ENCODE measurements at regions of chr2 and their contacts with region 1.

Region 1: GRCh38 chr2:12716282-12717190 is at the start of gene TRIB2:
- DNase-seq: peak; percentile 80 to 95
- ATAC-seq: peak; percentile 77 to 91 (median 84)
- H3K4me3 ChIP-seq: peak within 1 kb of the TSS; percentile 89
- H3K4me3 Mint-ChIP-seq: peak within 1 kb of the TSS; percentile 99
- H3K27ac ChIP-seq: peak within 1 kb of the TSS; percentile 88
- H3K27ac Mint-ChIP-seq: peak within 1 kb of the TSS; percentile 96 to 98
- H3K4me1 ChIP-seq: peaks cover 17% of the 10 kb centered on the region
- H3K4me1 Mint-ChIP-seq: peaks cover 61 to 72% of the 10 kb centered on the region in 2 donors
- H3K27me3 ChIP-seq: no peaks in the 10 kb centered on the region
- H3K27me3 Mint-ChIP-seq: no peaks in the 10 kb centered on the region
- CTCF ChIP-seq: peak; percentile 42
- total RNA-seq, gene TRIB2: 68.1 to 87.4 (median 84.5) TPM

Region 2: GRCh38 chr2:11829947-11830707 is 886.4 kb before region 1 on chr2:
- intact Hi-C with region 1: loop called (anchors 5 kb)
- DNase-seq: peak; percentile 26 to 74
- ATAC-seq: peak; percentile 75 to 81 (median 77)
- H3K4me3 ChIP-seq: peak overlapping the region; percentile 1
- H3K4me3 Mint-ChIP-seq: peak overlapping the region; percentile 88
- H3K27ac ChIP-seq: no peak overlapping the region
- H3K27ac Mint-ChIP-seq: peak overlapping the region; percentile 57 to 84
- H3K4me1 ChIP-seq: peaks cover 39% of the 10 kb centered on the region
- H3K4me1 Mint-ChIP-seq: peaks cover 48 to 49% of the 10 kb centered on the region in 2 donors
- H3K27me3 ChIP-seq: no peaks in the 10 kb centered on the region
- H3K27me3 Mint-ChIP-seq: no peaks in the 10 kb centered on the region
- CTCF ChIP-seq: no peak

Region 3: GRCh38 chr2:12005886-12006681 is 710.5 kb before region 1 on chr2:
- intact Hi-C with region 1: loop called (anchors 5 kb)
- DNase-seq: peak; percentile 81 to 91
- ATAC-seq: peak; percentile 86 to 98 (median 87)
- H3K4me3 ChIP-seq: no peak overlapping the region
- H3K4me3 Mint-ChIP-seq: peak overlapping the region; percentile 55
- H3K27ac ChIP-seq: no peak overlapping the region
- H3K27ac Mint-ChIP-seq: peak overlapping the region; percentile 50 to 81
- H3K4me1 ChIP-seq: peaks cover 19% of the 10 kb centered on the region
- H3K4me1 Mint-ChIP-seq: peaks cover 50 to 59% of the 10 kb centered on the region in 2 donors
- H3K27me3 ChIP-seq: peaks cover 67% of the 10 kb centered on the region
- H3K27me3 Mint-ChIP-seq: peaks cover 74 to 94% of the 10 kb centered on the region in 2 donors
- CTCF ChIP-seq: no peak

Region 4: DNA sequence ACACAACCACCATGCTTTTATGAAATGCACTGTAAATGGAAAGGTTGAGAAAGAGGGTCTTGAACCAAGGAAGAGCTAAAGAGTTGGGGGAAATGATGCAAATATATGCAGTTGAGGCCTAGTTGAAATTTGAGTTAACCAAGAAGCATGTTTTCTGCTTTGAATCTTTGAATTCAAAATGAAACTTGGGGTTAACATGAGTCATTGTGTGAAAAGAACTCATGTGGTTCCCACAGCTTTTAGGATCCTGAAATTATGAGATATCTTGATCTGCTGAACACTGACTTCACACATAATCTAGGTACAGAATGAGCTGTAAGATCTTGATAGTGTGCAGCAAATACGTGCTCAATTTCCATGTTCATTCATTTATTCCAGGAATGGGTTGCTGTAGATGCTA is 422.7 kb before region 1 on chr2:
- intact Hi-C with region 1: loop called (anchors 10 kb)
- DNase-seq: no peak
- ATAC-seq: peak; percentile 73 to 81 (median 75)
- H3K4me3 ChIP-seq: no peak overlapping the region
- H3K4me3 Mint-ChIP-seq: peak overlapping the region; percentile 26
- H3K27ac ChIP-seq: no peak overlapping the region
- H3K27ac Mint-ChIP-seq: peak overlapping the region in 1 of 2 donors; percentile 14
- H3K4me1 ChIP-seq: peaks cover 2% of the 10 kb centered on the region
- H3K4me1 Mint-ChIP-seq: peaks cover 22 to 27% of the 10 kb centered on the region in 2 donors
- H3K27me3 ChIP-seq: peaks cover 3% of the 10 kb centered on the region
- H3K27me3 Mint-ChIP-seq: peaks cover 7 to 30% of the 10 kb centered on the region in 2 donors
- CTCF ChIP-seq: no peak

Region 5: DNA sequence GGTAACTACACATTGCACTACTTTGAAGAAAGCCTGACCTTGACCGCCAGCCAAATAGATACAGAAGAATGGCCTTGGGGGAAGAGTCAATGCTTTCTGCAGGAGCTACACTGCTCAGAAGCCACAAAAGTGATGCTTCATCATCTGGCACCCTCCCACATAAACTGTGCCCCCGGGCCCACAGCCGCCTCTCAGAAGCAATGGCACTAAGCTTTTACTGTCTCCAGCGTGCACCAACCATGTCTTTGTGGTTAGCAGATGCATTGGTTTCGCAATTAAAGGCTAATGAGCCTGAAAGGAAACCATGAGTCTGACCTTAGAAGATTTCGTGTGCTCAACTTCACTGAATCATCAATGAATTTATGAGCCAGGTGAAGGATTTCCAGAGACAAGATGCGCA is 209.2 kb before region 1 on chr2:
- intact Hi-C with region 1: loop called (anchors 5 kb)
- DNase-seq: peak; percentile 29 to 66
- ATAC-seq: peak; percentile 87 to 94 (median 91)
- H3K4me3 ChIP-seq: no peak overlapping the region
- H3K4me3 Mint-ChIP-seq: peak overlapping the region; percentile 35
- H3K27ac ChIP-seq: peak overlapping the region; percentile 12
- H3K27ac Mint-ChIP-seq: peak overlapping the region; percentile 45 to 67
- H3K4me1 ChIP-seq: peaks cover 37% of the 10 kb centered on the region
- H3K4me1 Mint-ChIP-seq: peaks cover 54 to 72% of the 10 kb centered on the region in 2 donors
- H3K27me3 ChIP-seq: no peaks in the 10 kb centered on the region
- H3K27me3 Mint-ChIP-seq: no peaks in the 10 kb centered on the region
- CTCF ChIP-seq: no peak

Region 6: DNA sequence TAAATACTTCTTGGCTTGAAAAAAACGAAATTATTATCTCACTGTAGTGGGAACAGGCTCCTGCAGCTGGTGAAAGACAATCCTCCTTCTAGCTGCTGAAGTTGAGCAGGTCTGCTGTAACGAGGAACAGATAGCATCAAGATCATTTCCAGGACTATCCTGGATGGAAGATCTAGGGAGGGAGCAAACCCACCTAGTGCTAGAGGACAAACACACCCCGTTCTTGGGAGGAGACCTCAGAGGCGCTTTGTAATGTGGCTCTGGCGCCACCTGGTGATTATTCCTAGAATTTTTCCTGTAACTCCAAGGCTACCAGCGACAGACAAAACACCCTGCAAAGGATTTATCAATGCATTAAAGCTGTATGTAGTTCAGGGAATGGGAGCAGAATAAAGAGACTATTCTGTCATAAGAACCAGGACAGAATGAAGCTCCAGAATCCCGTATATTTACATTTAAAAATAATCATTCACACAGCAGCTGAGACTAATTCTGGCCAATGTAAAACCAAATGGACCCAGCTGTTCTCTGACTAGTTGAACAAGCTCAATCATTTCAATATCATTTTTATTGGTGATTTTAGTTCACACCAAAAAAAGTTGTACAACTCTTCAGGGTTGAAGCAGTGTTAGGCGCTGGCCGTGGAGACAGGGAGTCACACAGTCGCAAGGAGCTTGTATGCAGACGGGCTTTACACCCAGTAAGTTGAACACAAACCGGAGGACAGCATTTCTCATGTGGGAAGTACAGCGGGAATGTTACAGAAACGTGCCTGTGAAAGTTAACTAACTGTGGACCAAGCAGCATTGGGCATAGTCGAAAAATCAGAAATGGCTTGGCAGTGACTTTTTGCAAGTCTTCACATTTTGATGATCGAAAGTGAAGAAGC is 290.5 kb after region 1 on chr2:
- intact Hi-C with region 1: loop called (anchors 5 kb)
- DNase-seq: peak; percentile 52 to 82
- ATAC-seq: peak in 2 of 3 donors; percentile 62 to 83
- H3K4me3 ChIP-seq: no peak overlapping the region
- H3K4me3 Mint-ChIP-seq: no peak overlapping the region
- H3K27ac ChIP-seq: no peak overlapping the region
- H3K27ac Mint-ChIP-seq: no peak overlapping the region
- H3K4me1 ChIP-seq: peaks cover 3% of the 10 kb centered on the region
- H3K4me1 Mint-ChIP-seq: peaks cover 5 to 7% of the 10 kb centered on the region in 2 donors
- H3K27me3 ChIP-seq: no peaks in the 10 kb centered on the region
- H3K27me3 Mint-ChIP-seq: no peaks in the 10 kb centered on the region
- CTCF ChIP-seq: peak; percentile 93